ENCODE measurements at regions of chr7 and their contacts with region 1.

Region 1: GRCh38 chr7:151017953-151018420 is 6.3 kb downstream of the ATG9B start:
- DNase-seq: peak; percentile 98
- H3K4me3 ChIP-seq: peak overlapping the region; percentile 28 to 34
- H3K27ac ChIP-seq: peak overlapping the region in 1 of 2 experiments; percentile 18; a peak in 2 of 4 replicates
- H3K4me1 ChIP-seq: peaks cover 0 to 27% of the 10 kb centered on the region in 2 experiments; a peak in 1 of 4 replicates
- H3K27me3 ChIP-seq: peaks cover 15% of the 10 kb centered on the region; the same call in 1 of the 2 replicates
- CTCF ChIP-seq: peak; percentile 99
- EP300 ChIP-seq: no peak
- RAD21 ChIP-seq: peak; percentile 73

Region 2: GRCh38 chr7:150787321-150788281 is 230.4 kb before region 1 on chr7:
- CTCF ChIA-PET with region 1: interaction called, 24 read pairs
- POLR2A ChIA-PET with region 1: no interaction called
- DNase-seq: peak; percentile 75
- H3K4me3 ChIP-seq: no peak overlapping the region
- H3K27ac ChIP-seq: peak overlapping the region; percentile 47 to 100; a peak in 3 of 4 replicates
- H3K4me1 ChIP-seq: peaks cover 19 to 61% of the 10 kb centered on the region in 2 experiments; a peak in 3 of 4 replicates
- H3K27me3 ChIP-seq: no peaks in the 10 kb centered on the region
- CTCF ChIP-seq: no peak
- EP300 ChIP-seq: peak; percentile 31 to 96; a peak in 3 of 4 replicates
- RAD21 ChIP-seq: peak; percentile 59

Region 3: GRCh38 chr7:150903606-150904005 is 114.4 kb before region 1 on chr7:
- CTCF ChIA-PET with region 1: interaction called, 17 read pairs
- POLR2A ChIA-PET with region 1: interaction called, 3 read pairs
- DNase-seq: peak; percentile 40
- H3K4me3 ChIP-seq: no peak overlapping the region
- H3K27ac ChIP-seq: peak overlapping the region in 1 of 2 experiments; percentile 12; a peak in 1 of 4 replicates
- H3K4me1 ChIP-seq: peaks cover 11 to 35% of the 10 kb centered on the region in 2 experiments; a peak in 3 of 4 replicates
- H3K27me3 ChIP-seq: no peaks in the 10 kb centered on the region
- CTCF ChIP-seq: no peak
- EP300 ChIP-seq: peak in 1 of 2 experiments; percentile 81; a peak in 2 of 4 replicates
- RAD21 ChIP-seq: no peak

Region 4: GRCh38 chr7:150962553-150963399 is 55.2 kb before region 1 on chr7:
- CTCF ChIA-PET with region 1: interaction called, 60 read pairs
- POLR2A ChIA-PET with region 1: interaction called, 3 read pairs
- DNase-seq: peak; percentile 94
- H3K4me3 ChIP-seq: peak overlapping the region in 1 of 2 experiments; percentile 48; a peak in 1 of 4 replicates
- H3K27ac ChIP-seq: peak overlapping the region in 1 of 2 experiments; percentile 97; a peak in 2 of 4 replicates
- H3K4me1 ChIP-seq: peaks cover 0 to 89% of the 10 kb centered on the region in 2 experiments; a peak in 2 of 4 replicates
- H3K27me3 ChIP-seq: peaks cover 16% of the 10 kb centered on the region
- CTCF ChIP-seq: peak; percentile 95
- EP300 ChIP-seq: peak in 1 of 2 experiments; percentile 39; a peak in 1 of 4 replicates
- RAD21 ChIP-seq: peak; percentile 94

Region 5: DNA sequence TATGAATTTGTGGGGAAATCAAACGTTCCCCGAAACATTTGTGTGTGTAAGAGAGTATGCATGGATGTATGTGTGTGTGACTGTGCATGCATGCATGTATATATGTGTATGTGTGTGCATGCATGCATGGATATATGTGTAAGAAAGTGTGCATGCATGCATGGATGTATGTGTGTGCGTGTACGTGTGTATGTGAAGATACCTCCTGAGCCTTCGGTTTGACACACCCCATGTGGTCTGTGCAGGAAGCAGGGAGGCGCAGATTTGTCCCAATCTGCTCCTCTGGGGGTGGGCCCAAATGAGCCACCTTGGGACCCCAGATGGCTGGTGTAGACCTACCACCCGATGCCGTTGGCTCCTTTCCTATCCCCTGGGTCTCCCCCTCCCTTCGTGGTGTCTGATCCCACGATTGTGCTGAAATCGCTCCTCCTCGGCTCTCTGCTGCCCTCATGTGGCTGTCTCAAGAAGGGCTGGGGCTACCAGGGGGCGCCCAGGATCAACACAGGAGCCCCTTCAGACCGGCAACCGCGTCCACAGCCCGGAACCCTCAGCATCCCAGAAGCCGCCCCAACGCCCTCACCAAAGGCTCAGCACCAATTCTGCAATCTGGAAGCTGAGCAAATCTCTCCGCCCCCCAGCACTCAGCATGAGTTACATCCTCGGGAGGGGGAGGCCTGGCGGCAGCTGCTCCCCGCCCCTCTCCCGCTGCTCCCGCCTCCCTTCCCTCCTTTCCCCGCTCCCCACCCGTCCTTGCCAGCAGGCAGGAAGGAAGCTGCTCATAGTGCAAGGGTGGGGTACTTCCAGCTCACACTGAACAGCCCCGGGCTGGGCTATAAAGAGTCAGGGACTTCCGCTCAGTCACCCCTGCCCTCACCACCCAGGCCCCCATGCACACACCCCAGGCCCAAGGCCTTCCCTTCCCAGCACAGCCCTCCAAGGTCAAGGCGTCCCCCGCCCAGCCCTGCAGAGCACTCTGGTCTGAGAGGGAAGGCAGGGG is 29.5 kb before region 1 on chr7:
- CTCF ChIA-PET with region 1: interaction called, 151 read pairs
- POLR2A ChIA-PET with region 1: no interaction called
- DNase-seq: peak; percentile 95
- H3K4me3 ChIP-seq: peak overlapping the region; percentile 13 to 46; a peak in 2 of 4 replicates
- H3K27ac ChIP-seq: peak overlapping the region in 1 of 2 experiments; percentile 86; a peak in 2 of 4 replicates
- H3K4me1 ChIP-seq: peaks cover 0 to 32% of the 10 kb centered on the region in 2 experiments; a peak in 2 of 4 replicates
- H3K27me3 ChIP-seq: peaks cover 13% of the 10 kb centered on the region; the same call in 1 of the 2 replicates
- CTCF ChIP-seq: peak; percentile 97
- EP300 ChIP-seq: no peak
- RAD21 ChIP-seq: peak; percentile 92

Region 6: DNA sequence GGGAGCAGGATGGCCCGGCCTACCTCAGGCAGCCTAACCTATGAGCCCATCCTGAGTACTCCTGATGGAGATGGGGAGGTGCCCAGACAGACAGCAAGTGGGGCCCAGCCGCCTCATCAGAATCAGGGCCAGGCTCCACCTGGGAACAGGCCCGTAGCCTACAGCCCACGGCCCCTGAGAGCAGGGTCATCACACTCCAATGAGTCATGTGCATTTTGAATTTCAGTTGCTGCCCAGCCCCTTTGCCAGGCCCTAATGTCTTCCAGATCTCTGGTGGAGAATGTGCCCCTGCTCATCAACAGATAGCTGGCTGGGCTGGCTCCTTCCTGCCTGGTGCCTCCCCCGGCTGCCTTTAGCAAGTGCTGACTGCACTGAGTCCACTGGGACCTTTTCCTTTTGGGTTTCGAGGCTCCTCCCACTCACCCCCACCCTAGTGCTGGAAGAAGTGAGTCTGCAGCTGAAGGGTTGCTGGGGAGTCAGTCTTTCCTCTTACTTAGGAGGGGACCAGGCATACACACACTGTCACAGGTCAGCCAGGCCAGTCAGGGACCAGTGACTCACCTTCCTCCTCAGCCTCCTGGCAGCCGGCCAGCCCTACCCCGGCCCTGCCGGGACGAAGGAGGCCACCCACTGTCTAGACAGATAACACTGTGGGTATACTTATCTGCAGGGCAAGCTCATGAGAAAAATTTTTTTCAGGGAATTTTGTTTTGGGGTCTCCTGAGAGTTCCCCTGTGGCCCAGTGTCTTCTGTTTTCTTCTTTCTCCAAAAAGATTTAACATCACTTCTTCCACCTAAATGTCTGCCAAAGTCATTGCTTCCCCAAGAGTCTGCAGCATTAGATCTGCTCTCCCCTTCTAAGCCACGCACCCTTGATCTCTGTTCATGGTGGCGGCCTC is 21.2 kb after region 1 on chr7:
- CTCF ChIA-PET with region 1: interaction called, 59 read pairs
- POLR2A ChIA-PET with region 1: no interaction called
- DNase-seq: peak; percentile 87
- H3K4me3 ChIP-seq: no peak overlapping the region
- H3K27ac ChIP-seq: peak overlapping the region; percentile 98
- H3K4me1 ChIP-seq: peaks cover 25 to 30% of the 10 kb centered on the region in 2 experiments
- H3K27me3 ChIP-seq: no peaks in the 10 kb centered on the region
- CTCF ChIP-seq: no peak
- EP300 ChIP-seq: peak in 1 of 2 experiments; percentile 77; a peak in 1 of 4 replicates
- RAD21 ChIP-seq: peak; percentile 23; the same call in 1 of the 2 replicates

Region 7: DNA sequence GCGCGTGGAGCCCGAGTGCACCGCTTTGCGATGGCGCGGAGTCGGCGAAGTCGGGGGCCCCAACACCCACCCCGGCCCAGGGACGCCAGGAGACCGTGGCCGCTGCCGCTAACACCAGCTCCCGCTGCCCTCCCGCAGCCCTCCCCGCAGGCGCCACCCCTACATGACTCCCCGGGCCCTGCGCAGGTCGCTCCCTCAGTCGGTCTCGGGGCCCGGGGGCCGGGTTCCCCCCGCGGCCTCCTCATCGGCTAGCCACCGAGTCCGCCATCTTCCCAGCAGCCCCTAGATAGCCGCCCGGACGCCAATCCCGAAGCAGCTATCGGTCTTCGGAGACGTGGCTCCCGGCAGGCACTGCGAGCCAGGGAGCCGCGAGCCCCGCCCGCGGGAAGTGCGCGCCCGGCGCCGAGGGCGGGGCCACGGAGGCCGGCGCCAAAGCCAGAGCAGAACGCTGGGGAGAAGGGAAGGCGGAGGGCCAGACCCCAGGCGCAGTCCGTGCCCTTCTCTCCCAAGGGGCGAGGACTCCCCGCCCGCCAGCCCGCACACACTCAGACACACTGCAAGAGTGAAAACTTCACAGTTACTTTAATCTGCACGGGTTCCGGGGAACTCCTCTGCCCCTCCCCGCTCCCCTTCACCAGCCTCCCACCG is 62.7 kb after region 1 on chr7 and contains the start of gene FASTK:
- CTCF ChIA-PET with region 1: interaction called, 12 read pairs
- POLR2A ChIA-PET with region 1: no interaction called
- DNase-seq: peak; percentile 99
- H3K4me3 ChIP-seq: peak within 1 kb of the TSS; percentile 94 to 99
- H3K27ac ChIP-seq: peak within 1 kb of the TSS; percentile 78 to 95
- H3K4me1 ChIP-seq: peaks cover 30 to 48% of the 10 kb centered on the region in 2 experiments
- H3K27me3 ChIP-seq: no peaks in the 10 kb centered on the region
- CTCF ChIP-seq: no peak
- EP300 ChIP-seq: peak in 1 of 2 experiments; percentile 34; a peak in 1 of 4 replicates
- RAD21 ChIP-seq: no peak
- polyA plus RNA-seq, gene FASTK: 125 and 148 TPM in 2 replicates

Region 8: GRCh38 chr7:151142686-151143040 is 124.7 kb after region 1 on chr7:
- CTCF ChIA-PET with region 1: no interaction called
- POLR2A ChIA-PET with region 1: no interaction called
- DNase-seq: no peak
- H3K4me3 ChIP-seq: no peak overlapping the region
- H3K27ac ChIP-seq: no peak overlapping the region
- H3K4me1 ChIP-seq: peaks cover 0 to 13% of the 10 kb centered on the region in 2 experiments; a peak in 1 of 4 replicates
- H3K27me3 ChIP-seq: no peaks in the 10 kb centered on the region
- CTCF ChIP-seq: no peak
- EP300 ChIP-seq: no peak
- RAD21 ChIP-seq: no peak

Region 9: GRCh38 chr7:151152643-151153513 is 134.9 kb after region 1 on chr7:
- CTCF ChIA-PET with region 1: no interaction called
- POLR2A ChIA-PET with region 1: no interaction called
- DNase-seq: no peak
- H3K4me3 ChIP-seq: no peak overlapping the region
- H3K27ac ChIP-seq: no peak overlapping the region
- H3K4me1 ChIP-seq: no peaks in the 10 kb centered on the region
- H3K27me3 ChIP-seq: peaks cover 37% of the 10 kb centered on the region; the same call in 1 of the 2 replicates
- CTCF ChIP-seq: peak; percentile 31; the same call in 1 of the 2 replicates
- EP300 ChIP-seq: no peak
- RAD21 ChIP-seq: no peak

Measured in SK-N-SH (cell line).